ENCODE measurements at regions of chr10 and their contacts with region 1.

Region 1: DNA sequence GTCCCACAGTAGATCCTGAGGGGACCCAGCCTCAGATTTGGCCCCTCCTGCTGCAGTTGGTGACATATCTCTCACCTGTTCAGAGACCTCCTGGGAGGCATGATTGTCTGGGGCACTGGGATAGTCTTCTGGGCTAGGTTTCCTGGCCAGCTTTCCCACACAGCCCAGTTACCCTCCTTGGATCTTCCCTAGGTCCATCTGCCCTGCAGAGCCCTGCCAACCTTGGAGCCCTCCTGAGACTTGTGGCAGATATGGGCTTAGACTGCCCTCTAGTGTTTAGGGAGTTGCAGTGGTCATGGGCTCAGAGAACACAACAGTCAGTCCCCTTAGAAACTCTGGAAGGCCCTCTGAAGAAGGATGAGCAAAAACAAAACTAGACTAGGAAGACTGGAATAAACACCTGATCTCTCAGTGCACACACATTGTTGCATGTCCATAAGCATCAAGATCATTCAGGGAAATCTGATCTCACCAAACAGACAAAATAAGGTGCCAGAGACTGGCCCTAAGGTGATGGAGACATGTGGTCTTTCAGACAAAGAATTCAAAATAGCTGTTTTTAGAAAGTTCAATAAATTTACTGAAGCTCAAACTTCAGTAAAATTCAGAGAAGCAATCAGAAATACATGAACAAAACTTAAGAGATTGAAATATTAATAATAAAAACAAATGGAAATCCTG is 324.6 kb downstream of the ATRNL1 start:
- DNase-seq: peak; percentile 76
- H3K4me3 Mint-ChIP-seq: no peak overlapping the region
- H3K27ac Mint-ChIP-seq: no peak overlapping the region
- H3K4me1 Mint-ChIP-seq: no peaks in the 10 kb centered on the region
- H3K27me3 Mint-ChIP-seq: peaks cover 88% of the 10 kb centered on the region
- CTCF ChIP-seq: peak; percentile 74

Region 2: DNA sequence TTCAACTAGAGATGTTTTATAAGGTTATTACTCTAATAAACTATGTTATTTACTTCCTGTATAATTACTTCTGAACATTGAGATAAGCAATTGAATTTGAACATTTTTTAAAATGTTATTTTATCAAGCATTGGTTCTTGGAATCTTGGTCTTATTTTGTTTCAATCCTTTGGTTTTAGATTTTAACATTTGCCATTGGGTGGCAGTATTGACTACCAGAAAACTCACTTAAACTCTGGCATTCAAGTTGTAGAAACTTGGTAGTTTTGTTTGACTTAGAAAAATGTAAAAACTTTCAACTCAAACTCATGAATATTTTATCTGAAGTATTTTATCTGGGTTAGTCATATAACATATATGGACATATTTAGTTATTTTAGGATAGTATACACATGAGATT is 276.5 kb before region 1 on chr10:
- CTCF ChIA-PET with region 1: interaction called, 18 read pairs
- POLR2A ChIA-PET with region 1: no interaction called
- intact Hi-C with region 1: loop called (anchors 1 kb)
- DNase-seq: peak; percentile 27
- H3K4me3 Mint-ChIP-seq: no peak overlapping the region
- H3K27ac Mint-ChIP-seq: no peak overlapping the region
- H3K4me1 Mint-ChIP-seq: no peaks in the 10 kb centered on the region
- H3K27me3 Mint-ChIP-seq: peaks cover 63% of the 10 kb centered on the region
- CTCF ChIP-seq: peak; percentile 31

Region 3: DNA sequence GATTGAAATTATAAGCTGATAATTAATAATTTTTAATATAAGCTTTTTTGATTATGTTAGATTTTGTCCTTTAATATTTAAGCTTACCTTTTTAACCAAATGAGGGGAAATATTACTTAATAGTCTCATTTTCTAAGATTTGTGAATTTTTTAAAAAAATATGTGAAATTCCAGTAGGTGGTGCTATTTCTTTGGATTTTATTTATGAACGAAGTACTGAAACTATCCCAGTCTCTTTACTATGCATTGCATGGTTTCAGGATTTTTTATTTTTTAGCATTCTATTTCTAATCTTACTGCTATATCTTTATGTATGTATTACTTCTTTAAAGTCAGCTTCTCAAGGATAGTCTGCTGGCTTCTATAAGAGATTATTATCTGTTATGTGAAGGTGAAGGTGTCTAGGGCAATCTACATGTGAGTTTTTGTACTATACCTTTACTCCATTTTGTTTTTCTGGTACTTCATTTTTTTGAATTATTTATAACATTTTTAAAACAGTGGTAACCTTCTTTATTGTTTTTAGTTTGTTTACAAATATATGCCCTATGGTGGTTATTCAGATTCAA is 246.2 kb before region 1 on chr10:
- CTCF ChIA-PET with region 1: interaction called, 34 read pairs
- POLR2A ChIA-PET with region 1: no interaction called
- intact Hi-C with region 1: loop called (anchors 2 kb)
- DNase-seq: no peak
- H3K4me3 Mint-ChIP-seq: no peak overlapping the region
- H3K27ac Mint-ChIP-seq: no peak overlapping the region
- H3K4me1 Mint-ChIP-seq: no peaks in the 10 kb centered on the region
- H3K27me3 Mint-ChIP-seq: peaks cover 63% of the 10 kb centered on the region
- CTCF ChIP-seq: peak; percentile 41

Region 4: DNA sequence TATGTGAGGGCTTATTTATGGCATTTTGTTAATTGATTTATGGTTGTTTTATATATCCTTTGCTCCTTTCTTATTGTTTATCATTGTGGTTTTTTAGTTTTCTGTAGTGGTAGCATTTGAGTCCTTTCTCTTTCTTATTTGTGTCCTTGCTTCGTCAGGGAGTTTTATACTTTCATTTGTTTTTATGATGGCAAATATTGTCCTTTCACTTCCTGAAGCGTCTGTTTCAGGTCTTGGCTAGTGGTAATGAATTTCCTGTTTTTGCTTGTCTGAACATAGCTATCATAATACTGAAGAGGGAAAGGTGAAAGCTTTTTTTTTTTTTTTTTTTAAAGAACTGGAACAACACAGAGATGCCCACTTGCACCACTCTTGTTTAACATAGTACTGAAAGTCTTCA is 96.4 kb before region 1 on chr10:
- CTCF ChIA-PET with region 1: no interaction called
- POLR2A ChIA-PET with region 1: no interaction called
- intact Hi-C with region 1: no loop called
- DNase-seq: no peak
- H3K4me3 Mint-ChIP-seq: no peak overlapping the region
- H3K27ac Mint-ChIP-seq: no peak overlapping the region
- H3K4me1 Mint-ChIP-seq: no peaks in the 10 kb centered on the region
- H3K27me3 Mint-ChIP-seq: peaks cover 57% of the 10 kb centered on the region
- CTCF ChIP-seq: no peak

Region 5: DNA sequence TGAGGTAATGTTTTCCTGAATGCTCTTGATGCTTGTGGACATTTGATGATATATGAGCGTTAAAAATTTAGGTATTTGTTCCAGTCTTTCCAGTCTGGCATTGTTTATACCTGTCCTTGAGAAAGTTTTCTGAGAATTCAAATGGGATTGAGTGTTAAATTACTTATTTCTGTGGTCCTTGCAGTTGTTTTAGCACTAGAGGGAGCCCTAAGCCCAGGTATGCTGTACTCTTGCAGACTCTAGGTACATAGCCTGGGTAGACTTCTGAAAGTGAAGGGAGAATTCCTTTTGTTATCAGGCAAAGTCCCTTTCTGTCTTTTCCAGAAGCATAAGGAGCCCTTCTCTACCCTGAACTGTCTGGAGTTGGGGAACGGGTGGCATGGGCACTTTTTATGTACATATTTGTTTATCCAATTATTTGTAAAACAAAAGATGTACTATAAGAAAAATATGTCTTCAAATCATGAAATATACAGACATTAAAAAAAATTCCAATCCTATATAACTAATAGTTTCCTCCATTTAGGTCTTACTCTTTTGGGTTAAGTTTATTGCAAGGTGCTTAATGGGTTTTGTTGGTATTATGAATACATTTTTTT is 62.5 kb before region 1 on chr10:
- CTCF ChIA-PET with region 1: interaction called, 20 read pairs
- POLR2A ChIA-PET with region 1: no interaction called
- intact Hi-C with region 1: loop called (anchors 1 kb)
- DNase-seq: peak; percentile 77
- H3K4me3 Mint-ChIP-seq: no peak overlapping the region
- H3K27ac Mint-ChIP-seq: no peak overlapping the region
- H3K4me1 Mint-ChIP-seq: no peaks in the 10 kb centered on the region
- H3K27me3 Mint-ChIP-seq: peaks cover 90% of the 10 kb centered on the region
- CTCF ChIP-seq: peak; percentile 90

Region 6: GRCh38 chr10:115514895-115515294 is 97.2 kb after region 1 on chr10:
- CTCF ChIA-PET with region 1: no interaction called
- POLR2A ChIA-PET with region 1: no interaction called
- intact Hi-C with region 1: no loop called
- DNase-seq: no peak
- H3K4me3 Mint-ChIP-seq: no peak overlapping the region
- H3K27ac Mint-ChIP-seq: no peak overlapping the region
- H3K4me1 Mint-ChIP-seq: no peaks in the 10 kb centered on the region
- H3K27me3 Mint-ChIP-seq: peaks cover 33% of the 10 kb centered on the region
- CTCF ChIP-seq: no peak